GM12878 (cell line): ENCODE measurements at regions of chr12 and their contacts with region 1.

Region 1: GRCh38 chr12:69359531-69360347 is at the start of gene YEATS4:
- DNase-seq: peak; percentile 84
- ATAC-seq: peak; percentile 91
- H3K4me3 ChIP-seq: peak within 1 kb of the TSS; percentile 62
- H3K27ac ChIP-seq: peak within 1 kb of the TSS; percentile 98
- H3K4me1 ChIP-seq: no peaks in the 10 kb centered on the region; the same call in 1 of the 2 replicates
- H3K27me3 ChIP-seq: no peaks in the 10 kb centered on the region
- CTCF ChIP-seq: no peak
- EP300 ChIP-seq: no peak
- POLR2A ChIP-seq: peak; percentile 88
- RAD21 ChIP-seq: no peak
- polyA plus RNA-seq, gene YEATS4: 23.8 to 36.2 TPM

Region 2: GRCh38 chr12:69059483-69060457 is 300.0 kb before region 1 on chr12:
- CTCF ChIA-PET with region 1: no interaction called
- POLR2A ChIA-PET with region 1: no interaction called
- RAD21 ChIA-PET with region 1: no interaction called
- SMC1A ChIA-PET with region 1: no interaction called
- in situ Hi-C with region 1: no loop called
- intact Hi-C with region 1: no loop called
- DNase-seq: no peak
- ATAC-seq: no peak
- H3K4me3 ChIP-seq: no peak overlapping the region
- H3K27ac ChIP-seq: no peak overlapping the region
- H3K4me1 ChIP-seq: no peaks in the 10 kb centered on the region
- H3K27me3 ChIP-seq: no peaks in the 10 kb centered on the region
- CTCF ChIP-seq: no peak
- EP300 ChIP-seq: no peak
- POLR2A ChIP-seq: no peak
- RAD21 ChIP-seq: no peak

Region 3: DNA sequence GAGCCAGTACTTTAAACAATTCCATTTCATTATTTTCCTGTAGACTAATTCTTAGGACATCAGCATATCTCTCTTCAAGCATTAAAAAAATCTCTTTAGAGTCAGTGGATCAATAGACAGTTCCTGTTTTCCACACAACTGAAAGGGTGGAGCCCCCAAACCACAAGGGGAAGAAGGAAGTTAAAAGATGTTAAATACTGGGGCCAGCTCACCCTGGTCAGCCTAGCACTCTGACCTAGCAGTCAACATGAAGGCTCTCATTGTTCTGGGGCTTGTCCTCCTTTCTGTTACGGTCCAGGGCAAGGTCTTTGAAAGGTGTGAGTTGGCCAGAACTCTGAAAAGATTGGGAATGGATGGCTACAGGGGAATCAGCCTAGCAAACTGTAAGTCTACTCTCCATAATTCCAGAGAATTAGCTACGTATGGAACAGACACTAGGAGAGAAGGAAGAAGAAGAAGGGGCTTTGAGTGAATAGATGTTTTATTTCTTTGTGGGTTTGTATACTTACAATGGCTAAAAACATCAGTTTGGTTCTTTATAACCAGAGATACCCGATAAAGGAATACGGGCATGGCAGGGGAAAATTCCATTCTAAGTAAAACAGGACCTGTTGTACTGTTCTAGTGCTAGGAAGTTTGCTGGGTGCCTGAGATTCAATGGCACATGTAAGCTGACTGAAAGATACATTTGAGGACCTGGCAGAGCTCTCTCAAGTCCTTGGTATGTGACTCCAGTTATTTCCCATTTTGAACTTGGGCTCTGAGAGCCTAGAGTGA is 11.4 kb before region 1 on chr12 and contains the start of gene LYZ:
- CTCF ChIA-PET with region 1: interaction called, 12 read pairs
- POLR2A ChIA-PET with region 1: no interaction called
- RAD21 ChIA-PET with region 1: interaction called, 14 read pairs
- SMC1A ChIA-PET with region 1: interaction called, 3 read pairs
- in situ Hi-C with region 1: no loop called
- intact Hi-C with region 1: no loop called
- DNase-seq: no peak
- ATAC-seq: peak; percentile 28; the same call in 1 of the 3 replicates
- H3K4me3 ChIP-seq: no peak within 1 kb of the TSS
- H3K27ac ChIP-seq: no peak within 1 kb of the TSS
- H3K4me1 ChIP-seq: no peaks in the 10 kb centered on the region
- H3K27me3 ChIP-seq: no peaks in the 10 kb centered on the region
- CTCF ChIP-seq: no peak
- EP300 ChIP-seq: no peak
- POLR2A ChIP-seq: no peak
- RAD21 ChIP-seq: no peak
- polyA plus RNA-seq, gene LYZ: not detected

Region 4: GRCh38 chr12:69388371-69388770 is 28.6 kb after region 1 on chr12:
- CTCF ChIA-PET with region 1: interaction called, 22 read pairs
- POLR2A ChIA-PET with region 1: no interaction called
- RAD21 ChIA-PET with region 1: interaction called, 3 read pairs
- SMC1A ChIA-PET with region 1: interaction called, 8 read pairs
- in situ Hi-C with region 1: no loop called
- intact Hi-C with region 1: no loop called
- DNase-seq: no peak
- ATAC-seq: peak; percentile 60
- H3K4me3 ChIP-seq: no peak overlapping the region
- H3K27ac ChIP-seq: no peak overlapping the region
- H3K4me1 ChIP-seq: no peaks in the 10 kb centered on the region
- H3K27me3 ChIP-seq: no peaks in the 10 kb centered on the region
- CTCF ChIP-seq: peak; percentile 18 to 55 (median 54); a peak in 3 of 6 replicates
- EP300 ChIP-seq: no peak
- POLR2A ChIP-seq: no peak
- RAD21 ChIP-seq: peak; percentile 61

Region 5: DNA sequence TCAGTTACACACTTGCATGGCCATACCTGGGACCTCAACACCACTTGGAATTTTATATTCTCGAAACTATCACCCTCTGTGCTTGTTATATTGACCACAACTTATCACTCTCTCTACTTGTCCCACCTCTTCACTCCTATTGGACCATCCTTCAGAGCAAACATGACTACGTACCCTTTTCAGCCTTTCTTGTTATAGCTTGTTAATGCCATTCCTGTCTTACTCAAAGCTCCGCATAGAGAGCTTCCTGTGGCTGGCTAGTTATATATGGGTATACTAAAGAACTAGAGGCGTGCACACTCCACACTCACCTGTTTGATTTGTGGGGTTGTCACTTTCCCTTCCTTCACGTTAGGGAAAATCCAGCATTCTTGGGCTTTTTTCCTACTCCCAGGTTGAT is 84.2 kb after region 1 on chr12:
- CTCF ChIA-PET with region 1: no interaction called
- POLR2A ChIA-PET with region 1: no interaction called
- RAD21 ChIA-PET with region 1: no interaction called
- SMC1A ChIA-PET with region 1: no interaction called
- in situ Hi-C with region 1: no loop called
- intact Hi-C with region 1: no loop called
- DNase-seq: no peak
- ATAC-seq: no peak
- H3K4me3 ChIP-seq: no peak overlapping the region
- H3K27ac ChIP-seq: no peak overlapping the region
- H3K4me1 ChIP-seq: no peaks in the 10 kb centered on the region
- H3K27me3 ChIP-seq: no peaks in the 10 kb centered on the region
- CTCF ChIP-seq: no peak
- EP300 ChIP-seq: no peak
- POLR2A ChIP-seq: no peak
- RAD21 ChIP-seq: no peak

Region 6: DNA sequence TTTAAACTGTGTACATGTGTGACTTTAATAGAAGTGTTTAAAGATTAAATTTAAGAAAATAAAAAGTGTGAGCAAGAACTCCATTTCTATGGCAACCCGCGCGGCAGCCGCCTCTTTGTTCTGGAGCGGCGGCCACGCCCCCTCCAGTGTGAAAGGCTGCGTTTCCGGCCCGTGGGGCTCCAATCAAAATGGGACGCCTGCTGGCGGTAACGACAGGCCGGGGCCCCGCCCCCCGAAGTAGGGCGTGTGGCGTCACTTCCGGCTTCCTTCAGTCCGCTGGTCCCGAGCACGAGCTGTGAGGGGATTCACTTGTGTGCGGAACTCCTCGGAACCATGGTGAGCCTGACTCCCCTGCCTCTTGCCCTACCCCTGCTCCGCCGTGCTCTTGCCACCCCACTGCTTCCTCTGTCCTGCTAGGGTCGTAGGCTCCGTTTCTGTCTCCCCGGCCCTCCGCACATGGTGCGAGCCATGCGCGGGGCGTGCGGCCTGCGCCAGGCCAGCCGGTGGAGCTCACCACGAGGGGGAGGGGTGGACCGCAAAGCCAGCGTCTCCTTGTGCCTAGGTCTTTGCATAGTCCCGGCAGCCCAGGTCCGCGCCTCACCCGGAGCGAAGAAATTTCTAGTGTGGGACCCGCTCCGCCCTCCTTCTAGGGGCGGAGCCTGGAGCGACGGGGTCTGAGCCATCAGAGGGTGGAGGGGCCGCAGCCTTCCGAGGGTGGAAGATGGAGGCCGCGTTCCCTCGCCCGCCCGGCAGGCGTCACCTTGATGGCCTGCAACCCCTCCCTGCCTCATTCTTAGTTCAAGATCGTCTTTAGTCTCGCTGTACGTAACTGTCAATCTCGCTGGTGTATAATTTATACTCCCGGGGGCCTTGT is 225.7 kb after region 1 on chr12 and contains the start of gene CCT2:
- CTCF ChIA-PET with region 1: interaction called, 8 read pairs
- POLR2A ChIA-PET with region 1: interaction called, 4 read pairs
- RAD21 ChIA-PET with region 1: interaction called, 12 read pairs
- SMC1A ChIA-PET with region 1: interaction called, 12 read pairs
- in situ Hi-C with region 1: no loop called
- intact Hi-C with region 1: loop called (anchors 5 kb)
- DNase-seq: peak; percentile 74
- ATAC-seq: peak; percentile 95
- H3K4me3 ChIP-seq: peak within 1 kb of the TSS; percentile 99
- H3K27ac ChIP-seq: peak within 1 kb of the TSS; percentile 98
- H3K4me1 ChIP-seq: peaks cover 4% of the 10 kb centered on the region; the same call in 1 of the 2 replicates
- H3K27me3 ChIP-seq: no peaks in the 10 kb centered on the region
- CTCF ChIP-seq: peak in 2 of 3 experiments; percentile 15 to 38; a peak in 1 of 6 replicates
- EP300 ChIP-seq: no peak
- POLR2A ChIP-seq: peak; percentile 99
- RAD21 ChIP-seq: no peak
- polyA plus RNA-seq, gene CCT2: 355 to 374 TPM

Region 7: DNA sequence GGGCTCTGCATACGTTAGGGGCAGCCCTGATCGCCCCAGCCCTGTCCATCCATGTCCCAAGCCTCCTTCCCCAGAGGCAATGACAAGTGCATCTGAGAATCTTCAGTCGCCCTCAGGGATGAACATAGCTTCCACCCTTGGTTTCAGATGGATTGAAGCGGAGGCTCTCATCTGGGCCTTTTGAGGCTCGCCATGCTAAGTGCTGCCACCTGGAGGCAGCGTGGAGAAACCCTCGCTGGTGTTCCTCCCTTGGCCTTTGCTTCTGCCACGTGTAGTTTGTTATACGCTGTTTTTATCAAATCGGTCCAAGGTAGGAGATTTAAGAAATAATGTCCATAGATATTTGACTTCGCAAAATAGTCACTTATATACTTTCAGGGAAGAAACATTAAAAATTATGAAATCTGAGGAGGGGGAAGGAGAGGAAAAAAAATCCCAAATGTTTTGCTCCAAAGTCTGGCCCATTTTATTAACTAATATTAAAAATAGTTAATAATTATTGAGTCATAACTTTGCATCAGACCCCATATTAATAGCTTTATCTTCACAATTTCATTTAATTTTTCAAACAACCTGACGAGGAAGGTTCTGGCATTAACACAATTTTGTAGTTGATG is 279.8 kb after region 1 on chr12:
- CTCF ChIA-PET with region 1: interaction called, 93 read pairs
- POLR2A ChIA-PET with region 1: interaction called, 3 read pairs
- RAD21 ChIA-PET with region 1: interaction called, 44 read pairs
- SMC1A ChIA-PET with region 1: interaction called, 41 read pairs
- in situ Hi-C with region 1: loop called (anchors 5 kb)
- intact Hi-C with region 1: loop called (anchors 1 kb)
- DNase-seq: peak; percentile 15
- ATAC-seq: peak; percentile 96
- H3K4me3 ChIP-seq: no peak overlapping the region
- H3K27ac ChIP-seq: no peak overlapping the region
- H3K4me1 ChIP-seq: no peaks in the 10 kb centered on the region
- H3K27me3 ChIP-seq: no peaks in the 10 kb centered on the region
- CTCF ChIP-seq: peak; percentile 82 to 90 (median 87)
- EP300 ChIP-seq: no peak
- POLR2A ChIP-seq: no peak
- RAD21 ChIP-seq: peak; percentile 63

Region 8: GRCh38 chr12:69738351-69739286 is 378.9 kb after region 1 on chr12 and contains the start of gene RAB3IP:
- CTCF ChIA-PET with region 1: no interaction called
- POLR2A ChIA-PET with region 1: interaction called, 4 read pairs
- RAD21 ChIA-PET with region 1: no interaction called
- SMC1A ChIA-PET with region 1: interaction called, 4 read pairs
- in situ Hi-C with region 1: no loop called
- intact Hi-C with region 1: loop called (anchors 5 kb)
- DNase-seq: peak; percentile 51
- ATAC-seq: peak; percentile 88
- H3K4me3 ChIP-seq: peak within 1 kb of the TSS; percentile 77
- H3K27ac ChIP-seq: peak within 1 kb of the TSS; percentile 74
- H3K4me1 ChIP-seq: peaks cover 3% of the 10 kb centered on the region; the same call in 1 of the 2 replicates
- H3K27me3 ChIP-seq: no peaks in the 10 kb centered on the region
- CTCF ChIP-seq: peak; percentile 52 to 81 (median 64); a peak in 5 of 6 replicates
- EP300 ChIP-seq: peak in 1 of 2 experiments; percentile 1; a peak in 1 of 4 replicates
- POLR2A ChIP-seq: peak; percentile 69
- RAD21 ChIP-seq: no peak
- polyA plus RNA-seq, gene RAB3IP: 22.4 to 30.9 TPM